ENCODE measurements at regions of chr20 and their contacts with region 1.

Region 1: GRCh38 chr20:401682-402495 is 6.2 kb upstream of the RBCK1 start:
- DNase-seq: peak; percentile 94
- H3K4me3 Mint-ChIP-seq: peak overlapping the region; percentile 41
- H3K27ac Mint-ChIP-seq: peak overlapping the region; percentile 78
- H3K4me1 Mint-ChIP-seq: peaks cover 19% of the 10 kb centered on the region
- H3K27me3 Mint-ChIP-seq: no peaks in the 10 kb centered on the region
- CTCF ChIP-seq: no peak

Region 2: GRCh38 chr20:335686-336439 is 66.0 kb before region 1 on chr20:
- CTCF ChIA-PET with region 1: no interaction called
- POLR2A ChIA-PET with region 1: no interaction called
- intact Hi-C with region 1: no loop called
- DNase-seq: no peak
- H3K4me3 Mint-ChIP-seq: no peak overlapping the region
- H3K27ac Mint-ChIP-seq: no peak overlapping the region
- H3K4me1 Mint-ChIP-seq: no peaks in the 10 kb centered on the region
- H3K27me3 Mint-ChIP-seq: no peaks in the 10 kb centered on the region
- CTCF ChIP-seq: no peak

Region 3: DNA sequence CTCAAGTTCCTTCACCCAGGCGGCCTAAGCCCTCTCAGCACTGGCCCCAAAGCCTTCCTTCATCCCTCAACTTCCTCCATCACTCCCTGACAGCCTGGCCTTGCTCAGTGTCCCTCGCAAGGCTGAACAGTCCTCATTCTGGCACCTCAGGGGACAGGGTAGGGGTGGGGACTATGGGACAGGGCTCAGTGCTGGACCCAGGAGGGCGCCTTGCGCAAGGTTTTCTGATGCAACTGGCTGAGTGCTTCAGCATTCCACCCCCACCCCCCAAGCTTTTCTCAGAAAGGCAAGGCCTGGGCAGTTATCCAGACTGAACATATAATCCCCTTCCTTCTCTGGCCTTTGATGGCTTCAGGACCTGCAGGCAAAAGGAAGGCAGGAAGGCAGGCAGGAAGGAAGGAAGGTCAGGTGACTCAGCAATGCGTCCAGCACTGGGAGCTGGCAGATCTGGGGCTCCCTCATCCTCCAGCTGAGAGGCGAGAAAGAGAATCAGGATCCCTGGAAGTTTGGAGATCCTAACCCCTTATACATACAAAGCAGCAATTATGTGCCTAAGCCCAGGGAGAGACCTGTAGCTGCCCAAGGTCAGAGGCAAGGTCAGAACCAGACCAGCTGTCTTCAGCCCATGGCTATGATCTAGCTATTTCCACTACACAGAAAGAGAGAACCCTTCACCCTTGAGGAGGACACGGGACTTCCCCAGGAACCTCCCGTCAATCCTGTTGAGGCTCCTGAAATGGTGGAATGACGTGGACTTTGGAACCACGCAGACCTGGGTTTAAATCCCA is 29.9 kb before region 1 on chr20:
- CTCF ChIA-PET with region 1: interaction called, 4 read pairs
- POLR2A ChIA-PET with region 1: interaction called, 197 read pairs
- intact Hi-C with region 1: no loop called
- DNase-seq: peak; percentile 100
- H3K4me3 Mint-ChIP-seq: peak overlapping the region; percentile 26
- H3K27ac Mint-ChIP-seq: peak overlapping the region; percentile 95
- H3K4me1 Mint-ChIP-seq: peaks cover 56% of the 10 kb centered on the region
- H3K27me3 Mint-ChIP-seq: no peaks in the 10 kb centered on the region
- CTCF ChIP-seq: no peak

Region 4: DNA sequence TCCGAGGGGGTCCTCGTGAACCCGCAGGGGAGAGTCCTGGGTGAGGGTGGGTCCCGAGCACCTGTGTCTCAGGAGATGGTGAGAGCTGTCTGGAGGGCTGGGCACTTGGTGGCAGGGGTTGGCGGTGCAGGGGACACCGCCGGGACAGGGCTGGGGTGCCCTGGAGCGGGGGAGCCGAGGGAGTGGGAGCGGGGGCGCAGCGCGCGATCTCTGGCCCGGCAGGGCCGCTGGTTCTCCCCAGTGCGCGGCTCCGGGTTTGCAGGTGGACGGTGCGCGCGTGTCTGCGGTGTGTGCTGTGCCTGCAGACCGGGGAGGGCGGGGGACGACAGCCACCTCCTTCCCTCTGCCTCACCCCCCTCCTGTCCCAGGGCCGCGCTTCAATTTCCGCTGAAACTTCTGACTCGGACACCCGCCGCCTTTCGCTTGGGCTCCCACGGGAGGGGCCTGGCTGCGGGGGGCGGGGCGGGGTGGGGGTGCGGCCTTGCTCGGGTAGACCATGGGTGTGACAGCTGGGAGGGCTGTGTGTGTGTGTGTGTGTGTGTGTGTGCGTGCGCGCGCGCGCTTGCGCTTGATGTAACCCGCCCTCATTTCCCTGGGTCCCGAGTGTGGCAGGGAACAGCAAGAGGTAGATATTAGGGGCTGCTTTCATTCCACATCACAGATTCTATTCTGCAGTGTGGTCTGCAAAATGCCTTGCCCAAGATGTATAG is 20.2 kb before region 1 on chr20:
- CTCF ChIA-PET with region 1: interaction called, 10 read pairs
- POLR2A ChIA-PET with region 1: interaction called, 198 read pairs
- intact Hi-C with region 1: no loop called
- DNase-seq: peak; percentile 81
- H3K4me3 Mint-ChIP-seq: peak overlapping the region; percentile 79
- H3K27ac Mint-ChIP-seq: no peak overlapping the region
- H3K4me1 Mint-ChIP-seq: peaks cover 25% of the 10 kb centered on the region
- H3K27me3 Mint-ChIP-seq: no peaks in the 10 kb centered on the region
- CTCF ChIP-seq: no peak

Region 5: DNA sequence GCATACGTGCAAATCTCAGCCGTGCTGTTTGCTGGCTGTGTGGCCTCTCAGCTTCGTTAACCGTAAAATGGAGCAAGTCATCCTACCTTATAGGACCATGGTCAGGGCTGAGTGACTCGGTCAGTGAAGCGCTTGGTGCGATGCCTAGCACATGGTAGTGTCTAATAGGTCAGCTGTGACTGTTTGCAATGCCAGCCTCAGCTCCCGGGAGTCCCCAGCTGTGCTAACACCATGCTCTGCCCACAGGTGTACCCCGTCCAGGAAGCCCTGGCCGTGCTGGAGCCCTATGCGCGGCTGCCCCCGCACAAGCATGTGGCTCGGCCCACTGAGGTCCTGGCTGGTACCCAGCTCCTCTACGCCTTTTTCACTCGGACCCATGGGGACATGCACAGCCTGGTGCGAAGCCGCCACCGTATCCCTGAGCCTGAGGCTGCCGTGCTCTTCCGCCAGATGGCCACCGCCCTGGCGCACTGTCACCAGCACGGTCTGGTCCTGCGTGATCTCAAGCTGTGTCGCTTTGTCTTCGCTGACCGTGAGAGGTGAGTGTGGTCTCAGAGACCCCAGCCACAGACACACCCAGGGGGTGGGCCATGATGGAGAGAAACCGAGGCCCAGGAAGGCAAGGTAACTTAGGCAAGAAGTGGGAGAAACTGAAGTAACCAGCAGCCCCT is 10.7 kb before region 1 on chr20:
- CTCF ChIA-PET with region 1: interaction called, 10 read pairs
- POLR2A ChIA-PET with region 1: interaction called, 198 read pairs
- intact Hi-C with region 1: no loop called
- DNase-seq: no peak
- H3K4me3 Mint-ChIP-seq: no peak overlapping the region
- H3K27ac Mint-ChIP-seq: no peak overlapping the region
- H3K4me1 Mint-ChIP-seq: peaks cover 7% of the 10 kb centered on the region
- H3K27me3 Mint-ChIP-seq: no peaks in the 10 kb centered on the region
- CTCF ChIP-seq: no peak

Region 6: GRCh38 chr20:414161-414560 is 12.3 kb after region 1 on chr20:
- CTCF ChIA-PET with region 1: no interaction called
- POLR2A ChIA-PET with region 1: interaction called, 16 read pairs
- intact Hi-C with region 1: no loop called
- DNase-seq: no peak
- H3K4me3 Mint-ChIP-seq: no peak overlapping the region
- H3K27ac Mint-ChIP-seq: peak overlapping the region; percentile 66
- H3K4me1 Mint-ChIP-seq: peaks cover 45% of the 10 kb centered on the region
- H3K27me3 Mint-ChIP-seq: no peaks in the 10 kb centered on the region
- CTCF ChIP-seq: no peak

Region 7: GRCh38 chr20:472137-472846 is 70.4 kb after region 1 on chr20:
- CTCF ChIA-PET with region 1: no interaction called
- POLR2A ChIA-PET with region 1: no interaction called
- intact Hi-C with region 1: no loop called
- DNase-seq: no peak
- H3K4me3 Mint-ChIP-seq: no peak overlapping the region
- H3K27ac Mint-ChIP-seq: no peak overlapping the region
- H3K4me1 Mint-ChIP-seq: no peaks in the 10 kb centered on the region
- H3K27me3 Mint-ChIP-seq: peaks cover 21% of the 10 kb centered on the region
- CTCF ChIP-seq: no peak

Measured in MCF 10A (cell line).